ENCODE measurements at regions of chr1 and their contacts with region 1.

Region 1: DNA sequence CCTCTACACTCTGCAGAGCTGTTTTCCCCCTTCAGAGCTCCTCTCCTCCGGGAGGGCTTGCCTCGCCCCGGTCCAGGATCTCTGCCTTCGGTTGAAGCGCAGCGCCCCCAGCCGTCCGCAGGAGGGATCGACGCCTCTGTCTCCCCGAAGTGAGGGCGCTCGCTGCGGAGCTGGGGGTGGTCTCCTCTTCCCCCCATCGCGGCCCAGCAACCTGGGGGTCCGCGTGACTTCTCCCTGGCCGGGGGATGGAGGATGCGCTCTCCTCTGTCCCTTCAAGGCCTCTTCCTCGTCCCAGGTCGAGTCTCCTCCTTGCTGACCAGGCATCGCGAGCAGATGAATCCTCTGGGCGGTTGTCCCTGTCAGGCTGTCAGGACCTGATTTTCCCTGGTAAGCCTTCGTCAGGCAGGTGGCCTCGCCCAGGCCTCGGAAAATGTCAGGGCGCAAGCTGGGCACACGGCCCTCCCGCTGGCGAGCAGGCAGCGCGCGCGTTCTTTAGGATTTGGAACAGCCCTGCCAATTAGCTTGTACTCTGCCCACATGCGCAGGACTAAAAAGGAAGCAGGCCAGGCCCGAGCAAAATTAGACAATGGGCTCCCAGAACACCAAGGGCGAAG is 90.5 kb downstream of the EDEM3 start:
- DNase-seq: no peak
- ATAC-seq: peak; percentile 90
- H3K4me3 ChIP-seq: peak overlapping the region; percentile 14 to 44; a peak in 3 of 4 replicates
- H3K27ac ChIP-seq: no peak overlapping the region
- H3K4me1 ChIP-seq: no peaks in the 10 kb centered on the region; the same call in 1 of the 2 replicates
- H3K27me3 ChIP-seq: peaks cover 2% of the 10 kb centered on the region
- CTCF ChIP-seq: peak; percentile 93

Region 2: GRCh38 chr1:184563308-184563707 is 100.8 kb before region 1 on chr1:
- CTCF ChIA-PET with region 1: no interaction called
- POLR2A ChIA-PET with region 1: no interaction called
- in situ Hi-C with region 1: no loop called
- intact Hi-C with region 1: no loop called
- DNase-seq: no peak
- ATAC-seq: no peak
- H3K4me3 ChIP-seq: no peak overlapping the region
- H3K27ac ChIP-seq: no peak overlapping the region
- H3K4me1 ChIP-seq: no peaks in the 10 kb centered on the region
- H3K27me3 ChIP-seq: no peaks in the 10 kb centered on the region
- CTCF ChIP-seq: peak; percentile 28; the same call in 1 of the 2 replicates

Region 3: DNA sequence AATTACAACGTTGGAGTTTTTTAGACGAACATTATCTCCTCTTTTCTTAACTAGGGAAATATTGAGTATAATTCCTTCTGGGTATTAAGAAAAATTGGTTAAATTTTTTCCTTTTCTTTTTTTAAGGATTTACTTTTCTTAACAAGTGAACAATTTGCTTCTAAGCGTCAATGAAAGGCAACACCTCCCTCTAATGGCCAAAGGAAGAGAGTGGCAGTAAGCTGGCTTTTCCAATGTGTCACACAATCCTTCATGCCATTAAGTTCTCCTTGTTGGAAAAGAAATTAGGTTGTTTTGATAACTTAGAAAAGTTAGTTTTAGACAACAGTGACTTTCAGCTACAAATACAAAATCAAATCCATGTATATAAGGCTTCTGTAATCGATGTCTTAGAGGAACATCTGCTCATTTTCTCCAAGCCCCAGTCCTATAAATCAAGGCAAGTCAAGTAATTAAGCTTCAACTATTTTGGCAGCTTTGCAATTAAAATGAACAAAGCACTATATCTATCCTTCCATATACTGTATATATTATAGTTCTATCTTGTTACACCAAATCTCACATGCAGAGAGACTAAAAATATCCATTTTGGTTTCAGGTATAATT is 27.7 kb after region 1 on chr1:
- CTCF ChIA-PET with region 1: interaction called, 15 read pairs
- POLR2A ChIA-PET with region 1: no interaction called
- in situ Hi-C with region 1: no loop called
- intact Hi-C with region 1: no loop called
- DNase-seq: peak; percentile 27
- ATAC-seq: no peak
- H3K4me3 ChIP-seq: no peak overlapping the region
- H3K27ac ChIP-seq: no peak overlapping the region
- H3K4me1 ChIP-seq: no peaks in the 10 kb centered on the region
- H3K27me3 ChIP-seq: no peaks in the 10 kb centered on the region
- CTCF ChIP-seq: peak; percentile 71; the same call in 1 of the 2 replicates

Region 4: DNA sequence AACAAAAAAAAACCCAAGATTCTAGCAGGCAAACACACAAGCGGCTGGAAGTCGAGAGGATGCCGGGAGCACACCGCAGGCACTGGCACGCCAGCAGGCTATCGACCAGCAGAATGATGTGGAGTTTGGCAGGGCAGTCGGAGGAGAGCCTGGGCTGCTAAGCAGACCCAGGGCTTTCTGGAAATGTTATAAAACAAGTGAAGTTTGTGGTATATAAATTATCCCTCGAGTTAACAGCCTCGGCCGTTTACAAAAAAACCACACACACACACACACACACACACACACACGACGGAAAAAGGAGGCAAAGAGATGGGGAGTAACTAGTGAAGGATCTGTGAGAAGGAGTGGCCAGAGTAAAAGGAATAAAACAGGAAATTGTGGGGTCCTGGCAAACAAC is 740.1 kb after region 1 on chr1:
- CTCF ChIA-PET with region 1: no interaction called
- POLR2A ChIA-PET with region 1: no interaction called
- in situ Hi-C with region 1: no loop called
- intact Hi-C with region 1: no loop called
- DNase-seq: no peak
- ATAC-seq: peak; percentile 70
- H3K4me3 ChIP-seq: peak overlapping the region; percentile 12 to 35
- H3K27ac ChIP-seq: peak overlapping the region; percentile 54; the same call in 1 of the 2 replicates
- H3K4me1 ChIP-seq: peaks cover 11% of the 10 kb centered on the region
- H3K27me3 ChIP-seq: no peaks in the 10 kb centered on the region
- CTCF ChIP-seq: no peak

Measured in Panc1 (cell line).